Heart right ventricle (tissue), 16 donors: ENCODE measurements at regions of chr3 and their contacts with region 1.

Region 1: DNA sequence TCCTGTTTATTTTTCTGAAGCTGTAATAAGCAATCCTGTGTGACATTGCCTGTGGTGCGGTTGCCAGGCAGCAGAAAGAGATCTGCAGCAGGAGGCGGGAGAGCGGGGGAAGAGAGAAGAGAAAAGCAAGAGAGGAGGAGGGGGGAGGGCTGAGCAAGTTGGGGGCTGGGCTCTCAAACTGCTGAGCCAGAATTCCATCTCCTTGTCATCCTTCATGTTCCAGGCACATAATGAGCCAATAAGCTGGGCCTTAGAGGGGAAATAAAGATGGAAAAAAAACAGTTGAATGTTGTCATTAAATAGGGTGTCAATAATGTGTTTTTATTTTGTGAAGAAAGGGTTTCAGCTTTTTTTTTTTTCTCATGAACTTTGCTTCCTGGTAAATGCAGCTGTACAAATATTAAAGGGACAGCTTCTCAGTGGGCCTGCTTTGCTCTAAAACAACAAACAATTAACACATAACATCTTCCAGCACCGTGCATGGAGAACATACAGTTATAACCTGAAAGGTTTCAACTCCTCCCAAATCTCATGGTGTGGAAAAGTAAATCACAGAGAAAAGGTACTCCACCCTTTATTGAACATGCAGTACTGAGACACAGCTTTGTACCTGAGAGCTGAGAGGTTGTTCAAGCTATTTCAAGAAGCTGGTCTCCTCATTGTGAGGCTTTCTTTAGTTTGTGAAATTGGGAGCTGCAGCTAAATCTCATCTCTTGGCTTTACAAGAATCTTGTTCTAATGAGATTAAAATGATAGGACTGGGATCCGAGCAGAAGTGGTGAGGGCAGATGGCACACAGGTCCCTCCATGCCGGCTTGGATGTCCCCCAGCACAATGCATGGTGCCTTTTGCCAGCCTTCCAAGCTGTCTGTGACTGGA is 451.1 kb upstream of the KCNMB2 start:
- DNase-seq: peak; percentile 77 to 89
- ATAC-seq: peak; percentile 94 to 98 (median 96)
- H3K4me3 ChIP-seq: no peak overlapping the region
- H3K27ac ChIP-seq: peak overlapping the region; percentile 43 to 82 (median 69)
- H3K4me1 ChIP-seq: peaks cover 8 to 62% (median 32%) of the 10 kb centered on the region in 9 donors
- H3K27me3 ChIP-seq: no peaks in the 10 kb centered on the region
- CTCF ChIP-seq: no peak

Region 2: GRCh38 chr3:177724020-177724638 is 361.0 kb before region 1 on chr3:
- intact Hi-C with region 1: loop called in 1 of 10 experiments (anchors 5 kb)
- DNase-seq: peak; percentile 46 to 71
- ATAC-seq: peak; percentile 84 to 98 (median 94)
- H3K4me3 ChIP-seq: no peak overlapping the region
- H3K27ac ChIP-seq: peak overlapping the region; percentile 42 to 79 (median 64)
- H3K4me1 ChIP-seq: peaks cover 2 to 54% (median 40%) of the 10 kb centered on the region in 9 donors
- H3K27me3 ChIP-seq: no peaks in the 10 kb centered on the region
- CTCF ChIP-seq: no peak

Region 3: GRCh38 chr3:178159691-178160220 is 74.6 kb after region 1 on chr3:
- intact Hi-C with region 1: loop called in 1 of 10 experiments (anchors 10 kb)
- DNase-seq: no peak
- ATAC-seq: peak in 5 of 8 donors; percentile 29 to 81 (median 74)
- H3K4me3 ChIP-seq: no peak overlapping the region
- H3K27ac ChIP-seq: no peak overlapping the region
- H3K4me1 ChIP-seq: peaks cover 0 to 15% (median 6%) of the 10 kb centered on the region in 9 donors
- H3K27me3 ChIP-seq: no peaks in the 10 kb centered on the region
- CTCF ChIP-seq: no peak

Region 4: DNA sequence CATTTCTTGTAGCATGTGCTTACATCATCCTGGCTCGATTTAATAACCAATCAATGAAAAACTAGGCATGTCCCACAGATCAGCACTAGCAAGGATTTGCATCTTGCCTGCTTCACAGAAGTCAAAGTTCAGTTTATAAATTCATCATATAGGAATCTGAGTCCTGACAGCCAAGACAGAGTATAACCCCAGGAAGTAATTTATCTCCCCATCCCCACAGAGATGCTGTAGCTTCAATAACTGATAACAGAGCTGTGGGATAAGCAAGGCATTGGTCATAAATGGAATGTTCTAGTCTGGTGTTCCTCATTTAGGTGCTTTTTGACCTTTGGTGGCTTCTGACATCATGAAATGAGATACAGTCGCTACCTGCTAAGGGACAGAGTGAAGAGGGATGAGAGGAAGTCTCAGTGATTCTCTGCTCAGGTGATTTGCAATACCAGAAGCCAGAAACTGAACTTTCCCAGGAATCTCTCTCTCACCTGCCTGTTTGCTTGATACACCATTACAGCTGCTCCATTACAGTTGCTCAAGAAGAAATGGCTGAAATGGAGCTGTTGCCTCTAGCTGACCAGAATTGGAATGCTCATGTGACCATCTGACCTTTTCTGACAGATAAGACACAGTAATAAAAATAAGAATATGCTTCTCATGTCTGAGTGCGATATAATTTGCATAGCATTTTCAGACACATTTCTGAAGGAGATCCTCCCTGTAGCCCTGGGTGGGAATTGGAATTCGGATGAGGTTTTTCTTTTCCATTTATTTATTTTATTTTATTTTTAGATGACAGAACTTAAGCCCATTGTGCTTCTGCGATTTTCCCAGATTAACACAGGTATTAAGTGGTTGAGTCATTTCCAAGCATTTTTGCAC is 234.0 kb after region 1 on chr3:
- intact Hi-C with region 1: loop called in 3 of 10 experiments (anchors 2 to 10 kb)
- DNase-seq: no peak
- ATAC-seq: no peak
- H3K4me3 ChIP-seq: no peak overlapping the region
- H3K27ac ChIP-seq: peak overlapping the region in 6 of 10 donors; percentile 75 to 87 (median 79)
- H3K4me1 ChIP-seq: peaks cover 6 to 36% (median 19%) of the 10 kb centered on the region in 9 donors
- H3K27me3 ChIP-seq: no peaks in the 10 kb centered on the region
- CTCF ChIP-seq: no peak